B cell (primary cell): ENCODE measurements at regions of chr16 and their contacts with region 1.

Region 1: DNA sequence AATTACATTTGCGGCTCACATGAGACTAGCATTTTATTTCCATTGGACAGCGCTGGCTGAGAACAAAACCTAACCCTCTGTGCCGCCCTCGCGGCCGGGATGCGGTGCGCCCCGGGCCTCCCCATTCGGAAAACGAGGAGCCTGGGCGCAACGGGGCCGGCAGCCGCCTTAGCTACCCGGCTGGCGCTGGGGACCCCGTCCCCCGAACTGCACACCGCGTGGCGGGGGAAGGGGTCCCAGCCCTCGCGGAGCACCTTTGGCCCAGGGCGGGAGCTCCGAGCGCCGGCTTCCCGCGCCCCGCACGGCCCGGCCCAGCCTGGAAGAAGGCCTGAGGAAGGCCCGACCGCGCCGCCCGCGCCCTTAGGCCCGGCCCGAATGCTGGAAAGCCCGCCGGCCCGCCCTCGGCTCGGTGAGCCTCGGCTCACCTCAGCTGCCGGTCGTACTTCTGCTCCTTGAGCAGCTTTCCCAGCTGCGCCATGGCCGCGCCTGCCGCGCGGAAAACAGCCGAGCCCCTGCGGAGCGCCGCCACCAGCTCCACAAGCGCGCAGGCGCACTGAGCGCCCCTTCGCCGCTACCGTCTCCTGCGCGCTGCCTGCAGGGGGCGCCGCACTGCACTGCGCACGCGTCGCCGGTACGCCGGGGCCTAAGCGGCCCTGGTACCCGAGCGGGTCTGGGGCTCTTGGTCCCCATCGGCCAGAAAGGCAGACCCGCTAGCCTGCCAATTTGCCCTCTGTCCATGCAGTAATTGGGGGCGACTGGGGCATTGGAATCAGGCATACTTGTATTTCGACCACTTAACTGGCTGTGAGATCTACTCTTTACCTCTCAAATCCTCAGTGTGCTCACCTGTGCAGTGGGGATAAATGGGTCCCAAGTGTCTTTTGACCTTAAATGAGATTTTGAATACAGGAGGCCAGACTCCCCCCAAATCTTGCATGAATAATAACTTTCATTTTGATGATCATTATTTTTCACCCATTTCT is at the start of gene NAE1:
- DNase-seq: peak; percentile 95
- ATAC-seq: peak; percentile 98
- H3K4me3 ChIP-seq: peak within 1 kb of the TSS; percentile 57 to 87 (median 79)
- H3K4me3 Mint-ChIP-seq: peak within 1 kb of the TSS; percentile 77
- H3K27ac ChIP-seq: peak within 1 kb of the TSS in 1 of 2 donors; percentile 76
- H3K27ac Mint-ChIP-seq: peak within 1 kb of the TSS; percentile 67
- H3K4me1 ChIP-seq: peaks cover 10 to 22% of the 10 kb centered on the region in 2 donors
- H3K4me1 Mint-ChIP-seq: peaks cover 25% of the 10 kb centered on the region
- H3K27me3 ChIP-seq: peaks cover 0 to 3% (median 0%) of the 10 kb centered on the region in 4 experiments
- H3K27me3 Mint-ChIP-seq: peaks cover 5% of the 10 kb centered on the region
- CTCF ChIP-seq: peak; percentile 99
- total RNA-seq, gene NAE1: 57.6 and 62.5 TPM in 2 replicates

Region 2: GRCh38 chr16:66717112-66717675 is 113.5 kb before region 1 on chr16:
- CTCF ChIA-PET with region 1: no interaction called
- POLR2A ChIA-PET with region 1: no interaction called
- intact Hi-C with region 1: no loop called
- DNase-seq: no peak
- ATAC-seq: no peak
- H3K4me3 ChIP-seq: no peak overlapping the region
- H3K4me3 Mint-ChIP-seq: no peak overlapping the region
- H3K27ac ChIP-seq: no peak overlapping the region
- H3K27ac Mint-ChIP-seq: no peak overlapping the region
- H3K4me1 ChIP-seq: no peaks in the 10 kb centered on the region
- H3K4me1 Mint-ChIP-seq: no peaks in the 10 kb centered on the region
- H3K27me3 ChIP-seq: no peaks in the 10 kb centered on the region
- H3K27me3 Mint-ChIP-seq: peaks cover 6% of the 10 kb centered on the region
- CTCF ChIP-seq: no peak

Region 3: GRCh38 chr16:66844342-66845079 is 13.8 kb after region 1 on chr16 and contains the start of gene CA7:
- CTCF ChIA-PET with region 1: interaction called, 16 read pairs
- POLR2A ChIA-PET with region 1: no interaction called
- intact Hi-C with region 1: no loop called
- DNase-seq: no peak
- ATAC-seq: no peak
- H3K4me3 ChIP-seq: peak within 1 kb of the TSS in 3 of 5 experiments; percentile 15 to 33 (median 29)
- H3K4me3 Mint-ChIP-seq: peak within 1 kb of the TSS; percentile 74
- H3K27ac ChIP-seq: no peak within 1 kb of the TSS
- H3K27ac Mint-ChIP-seq: no peak within 1 kb of the TSS
- H3K4me1 ChIP-seq: peaks cover 17 to 18% of the 10 kb centered on the region in 2 donors
- H3K4me1 Mint-ChIP-seq: peaks cover 18% of the 10 kb centered on the region
- H3K27me3 ChIP-seq: peaks cover 0 to 39% (median 15%) of the 10 kb centered on the region in 4 experiments
- H3K27me3 Mint-ChIP-seq: peaks cover 47% of the 10 kb centered on the region
- CTCF ChIP-seq: no peak
- total RNA-seq, gene CA7: not detected in 2 replicates

Region 4: DNA sequence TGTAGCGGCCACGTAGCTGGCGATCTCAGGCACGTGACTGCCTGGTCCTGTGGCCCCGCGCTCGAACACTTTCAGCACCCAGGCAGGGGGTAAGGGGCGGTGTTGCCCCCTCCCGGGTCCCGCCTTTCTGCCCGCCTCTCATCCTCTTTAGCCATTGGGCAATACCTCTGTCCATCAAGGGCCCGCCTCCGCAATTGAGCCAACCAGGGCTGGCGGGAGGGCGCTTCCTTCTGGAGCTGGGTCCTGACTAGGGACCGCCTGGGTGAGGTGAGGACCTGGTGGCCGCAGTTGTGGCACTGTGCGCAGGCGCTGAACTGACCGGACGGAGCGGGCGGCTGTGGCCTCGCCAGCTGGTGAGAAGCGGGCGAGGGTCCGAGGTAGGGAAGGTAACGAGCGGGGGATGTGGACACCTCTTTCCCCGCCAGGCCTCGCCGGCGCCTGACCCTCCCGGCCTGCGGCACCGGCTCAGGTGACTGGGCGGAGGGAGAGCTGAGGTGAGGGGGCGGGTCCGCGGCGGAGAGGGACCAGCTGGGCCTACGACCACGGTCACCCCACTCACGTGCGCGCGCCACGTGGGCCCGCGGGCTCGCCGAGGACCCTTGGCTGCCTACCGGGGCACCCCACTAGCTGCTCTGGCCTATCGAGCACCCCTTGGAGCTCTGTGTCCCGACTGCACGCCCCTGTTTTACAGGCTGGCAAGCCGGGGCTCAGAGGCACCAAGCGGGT is 49.7 kb after region 1 on chr16 and contains the start of gene PDP2:
- CTCF ChIA-PET with region 1: interaction called, 15 read pairs
- POLR2A ChIA-PET with region 1: no interaction called
- intact Hi-C with region 1: loop called (anchors 2 kb)
- DNase-seq: peak; percentile 94
- ATAC-seq: peak; percentile 99
- H3K4me3 ChIP-seq: peak within 1 kb of the TSS; percentile 25 to 91 (median 85)
- H3K4me3 Mint-ChIP-seq: peak within 1 kb of the TSS; percentile 98
- H3K27ac ChIP-seq: peak within 1 kb of the TSS; percentile 6 to 46
- H3K27ac Mint-ChIP-seq: peak within 1 kb of the TSS; percentile 92
- H3K4me1 ChIP-seq: peaks cover 4 to 16% of the 10 kb centered on the region in 2 donors
- H3K4me1 Mint-ChIP-seq: peaks cover 17% of the 10 kb centered on the region
- H3K27me3 ChIP-seq: no peaks in the 10 kb centered on the region
- H3K27me3 Mint-ChIP-seq: no peaks in the 10 kb centered on the region
- CTCF ChIP-seq: no peak
- total RNA-seq, gene PDP2: 15.0 and 18.7 TPM in 2 replicates

Region 5: GRCh38 chr16:67063008-67063407 is 232.3 kb after region 1 on chr16:
- CTCF ChIA-PET with region 1: no interaction called
- POLR2A ChIA-PET with region 1: no interaction called
- intact Hi-C with region 1: no loop called
- DNase-seq: no peak
- ATAC-seq: no peak
- H3K4me3 ChIP-seq: no peak overlapping the region
- H3K4me3 Mint-ChIP-seq: peak overlapping the region; percentile 42
- H3K27ac ChIP-seq: no peak overlapping the region
- H3K27ac Mint-ChIP-seq: peak overlapping the region; percentile 0
- H3K4me1 ChIP-seq: peaks cover 8 to 16% of the 10 kb centered on the region in 2 donors
- H3K4me1 Mint-ChIP-seq: peaks cover 19% of the 10 kb centered on the region
- H3K27me3 ChIP-seq: no peaks in the 10 kb centered on the region
- H3K27me3 Mint-ChIP-seq: no peaks in the 10 kb centered on the region
- CTCF ChIP-seq: no peak

Region 6: DNA sequence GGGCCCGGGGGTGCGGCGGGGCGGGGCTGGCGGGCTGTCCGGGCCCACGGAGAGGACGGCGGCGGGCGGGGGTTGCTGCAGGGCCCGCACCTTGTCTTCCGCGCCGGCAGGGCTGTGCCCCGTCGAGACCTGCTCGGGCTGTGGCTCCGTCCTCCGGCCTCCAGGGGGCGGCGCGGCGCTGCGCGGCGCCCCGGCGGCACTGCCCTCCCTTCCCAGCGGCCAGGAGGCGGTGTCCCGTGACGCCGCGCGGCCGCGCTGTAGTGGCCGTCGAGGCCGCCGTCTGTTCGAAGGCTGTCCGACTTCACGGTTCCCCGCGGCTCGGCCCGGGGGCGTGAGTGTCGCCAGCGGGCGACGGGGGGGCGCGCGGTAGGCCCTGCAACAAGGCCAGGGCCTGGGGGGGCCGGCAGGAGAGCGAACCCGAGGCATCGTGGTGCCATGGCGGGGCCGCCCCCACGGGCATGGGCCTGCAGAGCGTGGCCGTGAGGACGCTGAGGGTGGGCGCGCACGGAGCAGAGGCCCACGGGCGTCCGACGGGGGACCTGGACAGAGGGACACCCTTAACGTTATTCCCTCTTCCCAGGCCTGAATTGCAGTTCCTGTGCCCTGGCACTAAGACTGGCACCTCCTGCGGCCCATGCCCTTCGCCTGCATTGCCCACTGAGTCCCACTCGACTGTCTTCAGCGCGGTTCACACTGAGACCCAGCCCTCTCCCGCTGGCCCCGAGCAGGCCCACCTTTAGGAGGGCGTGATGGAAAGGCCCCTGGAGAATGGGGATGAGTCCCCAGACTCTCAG is 448.8 kb after region 1 on chr16 and contains the start of gene PLEKHG4:
- CTCF ChIA-PET with region 1: no interaction called
- POLR2A ChIA-PET with region 1: no interaction called
- intact Hi-C with region 1: no loop called
- DNase-seq: peak; percentile 84
- ATAC-seq: peak; percentile 96
- H3K4me3 ChIP-seq: peak within 1 kb of the TSS in 4 of 5 experiments; percentile 51 to 72 (median 58)
- H3K4me3 Mint-ChIP-seq: peak within 1 kb of the TSS; percentile 85
- H3K27ac ChIP-seq: peak within 1 kb of the TSS in 1 of 2 donors; percentile 28
- H3K27ac Mint-ChIP-seq: peak within 1 kb of the TSS; percentile 56
- H3K4me1 ChIP-seq: peaks cover 7 to 11% of the 10 kb centered on the region in 2 donors
- H3K4me1 Mint-ChIP-seq: peaks cover 6% of the 10 kb centered on the region
- H3K27me3 ChIP-seq: no peaks in the 10 kb centered on the region
- H3K27me3 Mint-ChIP-seq: no peaks in the 10 kb centered on the region
- CTCF ChIP-seq: peak; percentile 81
- total RNA-seq, gene PLEKHG4: 6.0 and 6.7 TPM in 2 replicates